ENCODE measurements at regions of chr2 and their contacts with region 1.

Region 1: GRCh38 chr2:152635635-152636298 is 81.5 kb downstream of the PRPF40A start:
- DNase-seq: peak; percentile 34 to 88
- H3K4me3 ChIP-seq: no peak overlapping the region
- CTCF ChIP-seq: peak in 1 of 3 donors; percentile 34
- POLR2A ChIP-seq: no peak

Region 2: GRCh38 chr2:152036611-152037469 is 598.9 kb before region 1 on chr2:
- intact Hi-C with region 1: loop called (anchors 5 kb)
- DNase-seq: peak in 1 of 2 donors; percentile 61
- H3K4me3 ChIP-seq: no peak overlapping the region
- CTCF ChIP-seq: no peak
- POLR2A ChIP-seq: no peak

Region 3: GRCh38 chr2:152189622-152190495 is 445.9 kb before region 1 on chr2:
- intact Hi-C with region 1: loop called (anchors 5 kb)
- DNase-seq: no peak
- H3K4me3 ChIP-seq: no peak overlapping the region
- CTCF ChIP-seq: peak in 1 of 3 donors; percentile 51
- POLR2A ChIP-seq: no peak

Region 4: GRCh38 chr2:152485954-152486736 is 149.6 kb before region 1 on chr2:
- intact Hi-C with region 1: no loop called
- DNase-seq: peak; percentile 45 to 61
- H3K4me3 ChIP-seq: no peak overlapping the region
- CTCF ChIP-seq: no peak
- POLR2A ChIP-seq: no peak

Region 5: DNA sequence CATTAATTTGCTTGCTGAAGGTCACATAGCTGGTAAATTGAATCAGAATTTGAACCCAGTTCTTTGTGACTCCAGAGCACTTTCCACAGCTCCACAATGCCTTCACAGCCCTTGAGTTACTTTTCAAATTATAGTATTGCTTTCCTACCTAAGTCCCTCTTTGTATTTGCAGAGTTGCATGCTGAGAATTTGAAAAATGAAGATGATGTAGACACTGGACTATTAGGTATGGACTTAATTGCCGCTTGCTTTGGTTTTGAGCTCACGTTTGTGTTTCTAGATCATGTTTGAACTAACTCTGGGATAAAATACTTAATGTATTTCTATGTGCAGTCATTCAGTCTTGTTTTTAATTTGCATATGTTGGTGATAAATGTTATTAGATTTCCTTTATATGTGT is 84.6 kb after region 1 on chr2:
- intact Hi-C with region 1: no loop called
- DNase-seq: no peak
- H3K4me3 ChIP-seq: no peak overlapping the region
- CTCF ChIP-seq: no peak
- POLR2A ChIP-seq: no peak

Region 6: DNA sequence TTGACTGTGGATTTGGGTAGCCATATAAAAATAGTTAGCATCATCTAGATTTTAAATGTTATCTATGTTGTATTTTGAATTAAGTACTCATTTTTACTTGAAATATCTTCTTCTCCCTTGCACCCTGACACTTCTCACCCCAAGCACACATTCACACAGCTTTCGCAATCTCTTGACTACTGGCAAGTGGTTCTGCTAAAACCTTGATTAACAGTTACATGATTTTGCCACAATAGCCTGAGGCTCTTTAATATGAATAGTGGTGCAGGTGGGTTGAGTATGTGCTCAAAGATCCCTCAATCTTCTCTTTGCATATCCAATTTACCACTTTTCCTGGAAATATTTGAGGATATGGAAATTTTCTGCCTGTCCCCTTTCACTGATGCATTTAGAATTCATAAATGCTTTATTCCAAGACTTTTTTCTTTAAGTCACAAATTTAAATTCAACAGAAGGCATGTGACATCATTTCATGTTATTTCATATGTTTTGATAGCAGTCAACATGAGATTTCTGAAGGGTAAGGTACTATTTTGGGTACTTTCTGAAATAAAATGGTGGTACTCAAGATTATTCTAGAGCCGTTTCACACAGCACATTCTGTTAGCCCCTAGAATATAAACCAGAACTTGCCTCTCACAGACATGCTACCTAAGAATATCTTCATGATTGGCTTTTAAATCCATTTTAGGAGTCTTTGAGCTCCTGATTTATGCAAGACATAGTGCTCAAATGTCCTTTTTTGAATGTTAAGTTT is 503.0 kb after region 1 on chr2:
- intact Hi-C with region 1: no loop called
- DNase-seq: no peak
- H3K4me3 ChIP-seq: no peak overlapping the region
- CTCF ChIP-seq: no peak
- POLR2A ChIP-seq: no peak

Measured in lower leg skin (tissue), 4 donors.